Right cardiac atrium (tissue), 5 donors: ENCODE measurements at regions of chr9 and their contacts with region 1.

Region 1: DNA sequence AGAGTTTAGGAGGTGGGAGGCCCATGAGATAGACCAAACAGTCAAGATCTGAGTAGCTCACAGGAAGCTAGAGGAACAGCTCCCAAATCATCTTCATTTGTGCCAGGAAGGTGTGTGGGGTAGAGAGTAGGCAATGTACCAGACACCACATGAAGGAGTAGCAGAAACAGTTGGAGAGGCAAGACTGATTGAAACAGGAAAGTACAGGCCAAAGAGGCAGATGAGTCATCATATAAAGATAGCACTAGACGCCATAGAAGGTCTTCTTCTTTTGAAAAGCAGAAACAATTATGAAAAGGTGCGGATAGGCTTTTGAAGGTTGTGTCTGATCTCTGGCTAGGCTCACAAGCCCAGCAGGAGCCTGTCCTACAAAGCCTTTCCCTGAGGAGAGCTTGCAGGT is 62.7 kb upstream of the PALM2AKAP2 start:
- DNase-seq: no peak
- ATAC-seq: no peak
- H3K4me3 ChIP-seq: no peak overlapping the region
- H3K27ac ChIP-seq: no peak overlapping the region
- H3K4me1 ChIP-seq: no peaks in the 10 kb centered on the region
- H3K27me3 ChIP-seq: no peaks in the 10 kb centered on the region

Region 2: GRCh38 chr9:109689701-109690100 is 27.6 kb before region 1 on chr9:
- intact Hi-C with region 1: no loop called
- DNase-seq: no peak
- ATAC-seq: no peak
- H3K4me3 ChIP-seq: no peak overlapping the region
- H3K27ac ChIP-seq: no peak overlapping the region
- H3K4me1 ChIP-seq: no peaks in the 10 kb centered on the region
- H3K27me3 ChIP-seq: no peaks in the 10 kb centered on the region

Region 3: GRCh38 chr9:109779711-109780452 is 62.5 kb after region 1 on chr9 and contains the start of gene PALM2AKAP2:
- intact Hi-C with region 1: loop called in 1 of 4 experiments (anchors 10 kb)
- DNase-seq: peak; percentile 85 to 93 (median 91)
- ATAC-seq: peak; percentile 90
- H3K4me3 ChIP-seq: peak within 1 kb of the TSS; percentile 89
- H3K27ac ChIP-seq: peak within 1 kb of the TSS; percentile 80
- H3K4me1 ChIP-seq: peaks cover 8% of the 10 kb centered on the region
- H3K27me3 ChIP-seq: no peaks in the 10 kb centered on the region
- total RNA-seq, gene PALM2AKAP2: 82.5 to 130 (median 86.2) TPM

Region 4: DNA sequence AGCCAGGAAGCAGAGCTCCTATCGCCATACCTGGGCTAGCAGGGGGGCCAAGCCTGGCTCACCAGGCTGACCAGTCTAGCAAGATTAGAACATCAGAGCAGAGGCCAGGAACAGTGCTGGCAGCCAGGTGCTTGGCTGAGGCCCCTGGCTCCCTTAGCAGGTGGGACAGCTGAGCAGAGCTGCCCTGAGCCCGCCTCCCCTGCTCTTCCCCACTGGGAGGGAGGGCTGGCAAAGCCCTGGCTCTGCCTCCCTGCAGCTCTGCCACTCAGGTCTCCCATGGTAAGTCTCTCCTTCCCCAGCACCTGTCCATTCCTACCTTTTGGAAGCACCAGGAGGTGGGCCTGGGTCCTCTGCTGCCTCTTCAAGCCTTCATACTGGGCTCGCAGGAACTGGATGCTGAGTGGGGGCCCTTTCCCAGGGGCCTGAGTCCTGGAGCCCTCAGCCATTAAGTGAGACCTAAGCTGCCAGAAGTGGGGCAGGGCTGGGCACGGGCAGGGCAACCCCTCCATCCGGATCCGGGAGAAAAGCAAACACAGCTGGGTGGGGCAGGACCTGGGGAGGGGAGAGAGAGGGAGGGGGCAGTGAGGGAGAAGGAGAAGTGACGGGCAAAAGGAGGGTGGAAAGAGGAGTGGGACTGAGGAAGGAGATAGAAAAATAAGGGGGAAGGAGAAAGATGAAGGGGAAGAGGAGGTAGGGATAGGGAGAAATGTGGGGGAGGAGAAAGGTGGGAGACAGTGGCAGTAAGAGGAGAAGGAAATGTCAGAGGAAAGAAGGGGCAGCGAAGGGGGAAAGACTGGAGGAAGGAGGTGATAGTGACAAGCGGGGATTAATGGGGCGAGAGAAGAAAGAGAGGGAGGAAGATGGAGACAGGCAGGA is 490.0 kb after region 1 on chr9:
- intact Hi-C with region 1: no loop called
- DNase-seq: no peak
- ATAC-seq: peak; percentile 22 to 42
- H3K4me3 ChIP-seq: no peak overlapping the region
- H3K27ac ChIP-seq: no peak overlapping the region
- H3K4me1 ChIP-seq: no peaks in the 10 kb centered on the region
- H3K27me3 ChIP-seq: no peaks in the 10 kb centered on the region